Activated T-helper 2 cell treated with anti-CD3 and anti-CD28 coated beads, Interferon-gamma antibody, Interleukin-2, Interleukin-4, amounts not matched to agents 10 μg/mL and 5 μg/mL and 100 μg/mL, durations not matched to agents 14 hours and 24 hours and 36 hours (primary cell): ENCODE measurements at regions of chr10 and their contacts with region 1.

Region 1: DNA sequence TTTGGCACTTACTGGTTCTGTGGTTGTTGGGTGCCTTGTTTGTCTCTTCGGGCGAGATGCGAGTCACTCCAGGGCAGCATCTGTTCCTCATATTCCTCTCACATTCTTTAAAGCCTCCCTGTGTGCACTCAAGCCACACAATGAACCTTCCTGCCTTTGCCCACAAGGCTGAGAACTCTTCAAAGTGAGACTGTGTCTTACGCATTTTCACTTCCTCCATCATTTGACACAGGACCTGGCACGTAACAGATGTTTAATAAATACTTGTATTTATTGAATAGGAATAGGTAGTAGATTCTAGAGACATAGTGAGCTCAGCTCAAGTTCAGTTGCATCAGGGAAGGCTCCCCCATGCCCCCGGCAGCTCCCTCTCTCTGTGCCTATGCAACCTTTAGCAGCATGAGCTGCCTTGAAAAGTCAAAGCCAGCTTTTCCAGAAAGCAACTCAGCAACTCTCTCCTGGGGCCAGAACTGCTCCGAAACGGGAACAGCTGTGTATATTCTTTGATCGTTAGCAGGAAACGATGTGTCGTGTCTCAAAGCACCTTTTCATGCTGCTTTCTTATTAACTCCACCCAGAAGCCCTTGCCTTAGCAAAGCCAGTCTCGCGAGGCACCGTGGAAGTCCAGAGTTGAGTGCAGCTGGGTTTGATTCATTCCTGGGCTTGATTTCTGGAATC is 97.5 kb downstream of the PFKFB3 start:
- DNase-seq: peak; percentile 15
- H3K4me3 Mint-ChIP-seq: peak overlapping the region; percentile 69
- H3K27ac Mint-ChIP-seq: peak overlapping the region; percentile 88
- H3K4me1 Mint-ChIP-seq: peaks cover 57% of the 10 kb centered on the region
- H3K27me3 Mint-ChIP-seq: no peaks in the 10 kb centered on the region

Region 2: GRCh38 chr10:6275022-6275997 is 24.9 kb before region 1 on chr10:
- intact Hi-C with region 1: loop called (anchors 1 kb)
- DNase-seq: peak; percentile 79
- H3K4me3 Mint-ChIP-seq: peak overlapping the region; percentile 76
- H3K27ac Mint-ChIP-seq: peak overlapping the region; percentile 97
- H3K4me1 Mint-ChIP-seq: peaks cover 54% of the 10 kb centered on the region
- H3K27me3 Mint-ChIP-seq: no peaks in the 10 kb centered on the region